HEK293 (cell line): ENCODE measurements at regions of chr10 and their contacts with region 1.

Region 1: GRCh38 chr10:104353325-104354048 is at the start of gene CFAP58:
- H3K4me3 ChIP-seq: peak within 1 kb of the TSS; percentile 45
- H3K27ac ChIP-seq: no peak within 1 kb of the TSS
- H3K4me1 ChIP-seq: peaks cover 4% of the 10 kb centered on the region; the same call in 1 of the 2 replicates
- CTCF ChIP-seq: peak; percentile 85

Region 2: GRCh38 chr10:104337974-104338735 is 15.3 kb before region 1 on chr10 and contains the start of gene ITPRIP:
- CTCF ChIA-PET with region 1: interaction called, 19 read pairs
- POLR2A ChIA-PET with region 1: interaction called, 11 read pairs
- H3K4me3 ChIP-seq: peak within 1 kb of the TSS; percentile 84
- H3K27ac ChIP-seq: peak within 1 kb of the TSS; percentile 98
- H3K4me1 ChIP-seq: peaks cover 15% of the 10 kb centered on the region
- CTCF ChIP-seq: peak; percentile 92

Region 3: DNA sequence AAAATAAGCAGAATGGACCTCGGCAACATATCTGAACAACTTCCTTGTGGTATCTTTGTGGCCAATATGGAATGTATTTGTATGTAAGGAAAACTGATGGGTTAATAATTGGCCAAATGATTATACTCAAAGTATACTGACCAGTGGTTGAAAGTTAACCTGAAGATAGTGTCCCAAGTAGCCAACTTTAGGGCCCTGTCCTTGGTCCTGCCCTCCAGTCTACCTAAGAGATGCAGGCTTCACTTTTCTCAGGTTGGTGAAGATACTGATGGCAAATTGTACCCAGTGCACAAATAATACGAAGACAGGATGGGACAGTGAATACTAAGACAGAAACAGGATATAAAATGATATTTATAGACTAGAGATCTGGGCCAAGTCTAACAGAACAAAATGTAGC is 396.8 kb after region 1 on chr10:
- CTCF ChIA-PET with region 1: no interaction called
- POLR2A ChIA-PET with region 1: no interaction called
- H3K4me3 ChIP-seq: no peak overlapping the region
- H3K27ac ChIP-seq: no peak overlapping the region
- H3K4me1 ChIP-seq: no peaks in the 10 kb centered on the region
- CTCF ChIP-seq: no peak